AG04449 (cell line): ENCODE measurements at regions of chr1 and their contacts with region 1.

Region 1: GRCh38 chr1:204989266-204990058 is 53.5 kb upstream of the CNTN2 start:
- DNase-seq: peak; percentile 17
- H3K4me3 ChIP-seq: no peak overlapping the region
- CTCF ChIP-seq: peak; percentile 98

Region 2: DNA sequence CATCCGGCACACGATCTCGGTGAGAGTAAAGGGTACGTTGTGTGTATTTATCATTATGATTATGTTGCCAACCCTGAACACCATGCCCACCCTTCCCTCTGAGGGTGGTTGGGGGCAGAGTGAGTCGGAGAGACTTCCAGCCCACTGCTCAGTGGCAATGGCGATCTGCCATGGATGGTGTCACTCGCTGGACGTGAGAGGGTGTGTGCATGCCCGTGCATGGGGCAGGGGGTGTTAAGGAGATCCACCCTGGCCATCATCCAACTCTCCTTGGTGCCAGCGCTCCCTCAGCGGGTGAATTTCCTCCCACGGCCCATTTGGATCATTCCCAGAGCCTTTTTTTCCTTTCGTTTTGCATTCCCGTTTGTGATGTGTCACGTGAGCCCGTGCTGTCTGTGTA is 20.5 kb before region 1 on chr1:
- CTCF ChIA-PET with region 1: interaction called, 63 read pairs
- POLR2A ChIA-PET with region 1: no interaction called
- DNase-seq: no peak
- H3K4me3 ChIP-seq: no peak overlapping the region
- CTCF ChIP-seq: no peak

Region 3: GRCh38 chr1:205077158-205077933 is 87.9 kb after region 1 on chr1:
- CTCF ChIA-PET with region 1: interaction called, 13 read pairs
- POLR2A ChIA-PET with region 1: no interaction called
- DNase-seq: no peak
- H3K4me3 ChIP-seq: no peak overlapping the region
- CTCF ChIP-seq: no peak

Region 4: GRCh38 chr1:205088341-205088740 is 98.9 kb after region 1 on chr1:
- CTCF ChIA-PET with region 1: interaction called, 12 read pairs
- POLR2A ChIA-PET with region 1: no interaction called
- DNase-seq: no peak
- H3K4me3 ChIP-seq: no peak overlapping the region
- CTCF ChIP-seq: no peak